ENCODE measurements at regions of chrX and their contacts with region 1.

Region 1: GRCh38 chrX:39907964-39908616 is 189.7 kb downstream of the BCOR start:
- DNase-seq: peak; percentile 85 to 90
- ATAC-seq: peak; percentile 55
- H3K4me3 ChIP-seq: no peak overlapping the region
- H3K27ac ChIP-seq: peak overlapping the region in 1 of 2 donors; percentile 89
- H3K4me1 ChIP-seq: no peaks in the 10 kb centered on the region
- H3K27me3 ChIP-seq: no peaks in the 10 kb centered on the region

Region 2: DNA sequence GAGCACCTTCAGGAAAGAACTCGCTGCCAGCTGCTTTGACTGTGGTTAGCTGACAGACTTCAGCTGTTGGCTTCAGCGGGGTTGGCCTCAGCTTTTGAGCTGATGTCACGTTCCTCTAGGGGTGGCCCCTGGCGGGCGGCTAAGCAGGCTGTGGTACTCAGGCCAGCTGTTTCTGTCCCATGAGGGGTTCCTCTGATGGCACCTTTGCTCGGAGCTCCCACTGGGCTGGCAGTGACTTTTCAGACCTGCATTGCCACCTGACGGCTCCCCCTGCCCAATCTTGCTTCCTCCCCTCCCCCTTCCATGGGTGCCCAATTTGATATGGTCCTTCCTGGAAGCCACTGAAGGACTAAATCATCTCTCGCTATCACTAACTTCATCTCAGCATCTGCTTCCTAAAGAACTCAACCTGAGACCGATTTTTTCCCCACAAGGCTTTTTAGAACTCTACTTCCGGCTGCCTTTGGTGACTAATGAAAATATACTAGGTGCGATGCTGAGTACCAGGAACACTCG is 329.7 kb before region 1 on chrX:
- intact Hi-C with region 1: no loop called
- DNase-seq: peak; percentile 59 to 80
- ATAC-seq: no peak
- H3K4me3 ChIP-seq: no peak overlapping the region
- H3K27ac ChIP-seq: no peak overlapping the region
- H3K4me1 ChIP-seq: no peaks in the 10 kb centered on the region
- H3K27me3 ChIP-seq: no peaks in the 10 kb centered on the region

Region 3: DNA sequence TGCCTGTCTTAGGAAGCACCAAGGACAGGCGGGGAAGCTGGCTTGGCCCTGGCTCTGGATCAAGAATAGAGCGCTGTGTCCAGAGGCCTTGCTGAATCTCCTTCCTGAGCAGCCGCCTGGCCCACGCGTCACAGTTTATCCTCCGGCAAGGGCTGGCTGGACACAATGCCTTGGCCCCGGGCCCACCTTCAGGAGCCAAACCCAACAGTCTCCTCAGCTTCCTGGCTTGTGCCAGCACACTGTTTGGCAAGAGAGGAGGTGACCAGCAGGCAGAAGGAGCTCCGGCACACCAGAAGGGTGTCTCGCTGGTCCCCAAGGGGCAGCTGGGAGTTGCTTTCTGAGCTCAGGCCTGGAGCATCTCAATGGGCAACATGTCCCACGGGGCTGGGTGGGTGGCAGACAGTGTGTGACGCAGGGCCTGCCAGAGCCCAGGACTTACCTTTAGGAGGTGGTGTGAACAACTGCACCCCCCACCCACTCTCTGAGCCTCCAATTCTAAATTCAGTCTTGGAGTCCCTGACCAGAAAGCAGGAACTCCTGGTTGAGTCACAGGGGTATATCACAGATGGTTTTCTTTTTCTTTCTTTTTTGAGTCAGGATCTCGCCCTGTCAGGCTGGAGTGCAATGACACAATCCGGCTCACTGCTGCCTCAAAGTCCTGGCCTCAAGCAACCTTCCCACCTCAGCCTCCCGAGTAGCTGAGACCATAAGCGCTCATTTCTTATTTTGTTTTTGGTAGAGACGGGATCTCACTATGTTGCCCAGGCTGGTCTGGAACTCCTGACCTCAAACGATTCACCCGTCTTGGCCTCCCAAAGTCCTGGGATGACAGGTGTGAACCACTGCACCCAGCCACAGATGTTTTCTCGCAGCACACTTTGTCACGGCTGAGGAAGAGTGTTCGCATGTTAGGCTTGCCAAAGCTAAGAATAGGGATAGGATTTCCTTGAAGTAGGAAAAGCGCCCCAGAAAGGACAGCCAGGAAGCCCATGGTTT is 171.6 kb before region 1 on chrX:
- intact Hi-C with region 1: loop called (anchors 1 to 10 kb)
- DNase-seq: peak; percentile 92 to 95
- ATAC-seq: peak; percentile 91
- H3K4me3 ChIP-seq: no peak overlapping the region
- H3K27ac ChIP-seq: peak overlapping the region in 1 of 2 donors; percentile 84
- H3K4me1 ChIP-seq: peaks cover 0 to 2% of the 10 kb centered on the region in 2 donors
- H3K27me3 ChIP-seq: no peaks in the 10 kb centered on the region

Region 4: GRCh38 chrX:39848900-39849299 is 59.2 kb before region 1 on chrX:
- intact Hi-C with region 1: no loop called
- DNase-seq: no peak
- ATAC-seq: no peak
- H3K4me3 ChIP-seq: no peak overlapping the region
- H3K27ac ChIP-seq: no peak overlapping the region
- H3K4me1 ChIP-seq: no peaks in the 10 kb centered on the region
- H3K27me3 ChIP-seq: no peaks in the 10 kb centered on the region

Region 5: DNA sequence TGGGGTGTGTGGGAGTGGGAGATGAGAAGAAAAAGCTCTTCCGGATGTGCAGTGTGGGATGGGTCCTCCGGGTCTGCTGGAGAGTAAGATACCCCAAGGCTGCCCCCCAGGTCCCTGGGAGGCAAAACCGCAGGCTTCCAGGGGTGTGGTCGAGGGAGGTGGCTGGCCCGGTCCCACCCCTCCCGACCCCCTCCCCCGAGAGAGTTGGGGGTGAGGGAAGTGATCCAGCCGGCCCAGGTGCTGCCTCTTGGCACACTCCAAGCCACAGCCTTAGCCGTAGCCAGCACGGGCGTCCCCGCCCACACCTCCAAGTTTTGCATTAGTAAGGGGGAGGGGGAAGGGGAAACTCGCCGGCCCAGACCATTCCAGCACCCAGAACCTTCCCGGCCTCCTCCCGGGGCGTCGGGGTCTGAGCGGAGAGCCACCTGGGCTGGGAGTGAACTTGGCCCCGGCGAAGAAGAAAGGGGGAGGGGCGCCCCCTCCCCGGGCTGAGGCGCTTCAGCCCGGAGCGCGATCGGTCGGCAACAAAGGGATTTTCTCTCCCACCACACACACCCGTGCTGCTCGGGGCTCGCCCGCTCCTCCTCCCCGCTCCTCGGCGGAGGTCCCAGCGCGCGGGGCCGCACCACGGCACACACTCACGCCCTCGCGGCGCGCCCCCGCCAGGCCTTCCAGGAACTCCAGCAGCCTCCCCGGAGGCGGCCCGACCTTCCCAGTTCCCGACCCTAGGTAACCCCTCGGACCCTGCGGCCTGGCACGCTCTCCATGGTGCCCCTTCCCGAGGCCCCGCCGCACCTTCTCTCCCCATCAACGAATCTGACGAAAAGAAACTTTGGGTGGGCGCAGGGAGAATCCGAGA is 175.3 kb after region 1 on chrX:
- intact Hi-C with region 1: loop called (anchors 10 kb)
- DNase-seq: peak in 1 of 2 donors; percentile 81
- ATAC-seq: peak; percentile 51
- H3K4me3 ChIP-seq: no peak overlapping the region
- H3K27ac ChIP-seq: no peak overlapping the region
- H3K4me1 ChIP-seq: no peaks in the 10 kb centered on the region
- H3K27me3 ChIP-seq: no peaks in the 10 kb centered on the region

Region 6: GRCh38 chrX:40266490-40267333 is 358.6 kb after region 1 on chrX:
- intact Hi-C with region 1: loop called in 1 of 2 experiments (anchors 10 kb)
- DNase-seq: peak; percentile 75 to 88
- ATAC-seq: peak; percentile 88
- H3K4me3 ChIP-seq: peak overlapping the region in 1 of 2 donors; percentile 75
- H3K27ac ChIP-seq: peak overlapping the region; percentile 2 to 87
- H3K4me1 ChIP-seq: no peaks in the 10 kb centered on the region
- H3K27me3 ChIP-seq: no peaks in the 10 kb centered on the region